Activated CD4-positive, alpha-beta memory T cell treated with anti-CD3 and anti-CD28 coated beads for 36 hours (primary cell): ENCODE measurements at regions of chr3 and their contacts with region 1.

Region 1: DNA sequence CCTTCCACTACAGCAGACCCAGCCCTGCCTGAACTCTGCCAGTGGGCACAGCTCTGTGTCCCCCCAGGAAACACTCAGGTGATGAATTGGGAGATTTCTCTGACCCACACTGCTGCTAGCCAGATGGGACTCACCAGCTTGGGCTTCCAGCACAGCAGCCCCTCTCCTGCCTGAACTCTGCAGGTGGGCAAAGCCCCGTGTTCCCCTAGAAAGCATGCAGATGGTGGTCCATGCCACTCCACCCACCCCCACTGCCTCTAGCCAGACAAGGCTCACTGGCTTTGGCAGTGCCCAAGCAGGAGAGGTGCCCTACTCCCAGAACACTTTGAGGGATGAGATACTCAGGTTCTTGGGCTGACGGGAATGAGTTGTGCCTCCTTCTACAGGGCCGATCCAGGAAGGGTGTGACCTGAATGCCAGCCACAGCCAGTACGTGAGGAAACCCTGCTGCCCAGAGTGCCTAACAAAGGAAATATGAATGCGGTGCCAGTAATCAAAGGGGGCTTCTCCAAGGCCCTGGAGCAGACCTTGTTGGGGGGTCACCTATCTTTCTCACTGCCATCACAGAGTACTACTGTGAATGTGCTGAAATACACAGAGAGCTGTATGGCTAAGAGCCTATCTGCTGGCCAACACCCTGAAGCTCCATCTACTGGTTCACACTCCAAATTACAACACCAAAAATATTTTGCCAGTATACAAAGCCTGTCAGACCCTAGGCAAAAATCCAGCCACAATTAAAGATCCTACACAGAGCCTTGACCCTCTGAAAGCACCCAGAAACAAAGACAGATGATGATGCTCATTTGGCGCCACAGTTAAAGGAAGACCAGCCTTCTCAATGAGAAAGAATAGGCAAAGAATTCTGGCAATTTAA is 61.9 kb downstream of the BTLA start:
- DNase-seq: peak; percentile 21
- H3K4me3 Mint-ChIP-seq: no peak overlapping the region
- H3K27ac Mint-ChIP-seq: peak overlapping the region; percentile 40
- H3K4me1 Mint-ChIP-seq: peaks cover 40% of the 10 kb centered on the region
- H3K27me3 Mint-ChIP-seq: no peaks in the 10 kb centered on the region

Region 2: GRCh38 chr3:112327371-112327951 is 109.9 kb before region 1 on chr3:
- CTCF ChIA-PET with region 1: interaction called, 44 read pairs
- POLR2A ChIA-PET with region 1: interaction called, 5 read pairs
- intact Hi-C with region 1: loop called (anchors 1 kb)
- DNase-seq: no peak
- H3K4me3 Mint-ChIP-seq: no peak overlapping the region
- H3K27ac Mint-ChIP-seq: no peak overlapping the region
- H3K4me1 Mint-ChIP-seq: peaks cover 5% of the 10 kb centered on the region
- H3K27me3 Mint-ChIP-seq: peaks cover 5% of the 10 kb centered on the region

Region 3: DNA sequence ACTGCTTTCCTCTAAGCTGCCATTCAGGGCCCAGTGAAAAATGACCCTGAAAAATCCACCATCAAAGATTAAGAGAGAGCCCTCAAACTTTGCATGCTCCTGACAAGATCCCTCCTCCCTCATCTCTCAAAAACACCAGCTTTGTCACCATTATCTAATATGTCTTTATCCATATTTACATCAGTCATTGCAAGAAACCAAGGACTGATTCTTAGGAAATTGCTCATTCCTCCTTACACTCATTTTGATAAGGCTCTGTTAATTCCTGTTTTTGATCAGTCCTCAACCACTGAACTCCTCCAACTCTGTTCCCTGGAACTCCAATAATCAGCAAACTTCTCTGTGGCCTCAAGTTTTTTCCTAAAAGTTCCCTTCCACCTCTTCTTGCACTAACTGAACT is 52.6 kb before region 1 on chr3:
- CTCF ChIA-PET with region 1: no interaction called
- POLR2A ChIA-PET with region 1: no interaction called
- intact Hi-C with region 1: loop called (anchors 2 kb)
- DNase-seq: no peak
- H3K4me3 Mint-ChIP-seq: no peak overlapping the region
- H3K27ac Mint-ChIP-seq: peak overlapping the region; percentile 44
- H3K4me1 Mint-ChIP-seq: peaks cover 37% of the 10 kb centered on the region
- H3K27me3 Mint-ChIP-seq: no peaks in the 10 kb centered on the region

Region 4: GRCh38 chr3:112405845-112406244 is 31.5 kb before region 1 on chr3:
- CTCF ChIA-PET with region 1: interaction called, 4 read pairs
- POLR2A ChIA-PET with region 1: no interaction called
- intact Hi-C with region 1: loop called (anchors 2 kb)
- DNase-seq: peak; percentile 64
- H3K4me3 Mint-ChIP-seq: no peak overlapping the region
- H3K27ac Mint-ChIP-seq: no peak overlapping the region
- H3K4me1 Mint-ChIP-seq: peaks cover 22% of the 10 kb centered on the region
- H3K27me3 Mint-ChIP-seq: peaks cover 3% of the 10 kb centered on the region

Region 5: GRCh38 chr3:112425858-112426750 is 11.3 kb before region 1 on chr3:
- CTCF ChIA-PET with region 1: no interaction called
- POLR2A ChIA-PET with region 1: no interaction called
- intact Hi-C with region 1: no loop called
- DNase-seq: no peak
- H3K4me3 Mint-ChIP-seq: no peak overlapping the region
- H3K27ac Mint-ChIP-seq: no peak overlapping the region
- H3K4me1 Mint-ChIP-seq: peaks cover 4% of the 10 kb centered on the region
- H3K27me3 Mint-ChIP-seq: no peaks in the 10 kb centered on the region

Region 6: GRCh38 chr3:112519424-112520001 is 82.1 kb after region 1 on chr3:
- CTCF ChIA-PET with region 1: interaction called, 10 read pairs
- POLR2A ChIA-PET with region 1: no interaction called
- intact Hi-C with region 1: loop called (anchors 1 kb)
- DNase-seq: no peak
- H3K4me3 Mint-ChIP-seq: no peak overlapping the region
- H3K27ac Mint-ChIP-seq: no peak overlapping the region
- H3K4me1 Mint-ChIP-seq: peaks cover 18% of the 10 kb centered on the region
- H3K27me3 Mint-ChIP-seq: no peaks in the 10 kb centered on the region